ENCODE measurements at regions of chr12 and their contacts with region 1.

Region 1: DNA sequence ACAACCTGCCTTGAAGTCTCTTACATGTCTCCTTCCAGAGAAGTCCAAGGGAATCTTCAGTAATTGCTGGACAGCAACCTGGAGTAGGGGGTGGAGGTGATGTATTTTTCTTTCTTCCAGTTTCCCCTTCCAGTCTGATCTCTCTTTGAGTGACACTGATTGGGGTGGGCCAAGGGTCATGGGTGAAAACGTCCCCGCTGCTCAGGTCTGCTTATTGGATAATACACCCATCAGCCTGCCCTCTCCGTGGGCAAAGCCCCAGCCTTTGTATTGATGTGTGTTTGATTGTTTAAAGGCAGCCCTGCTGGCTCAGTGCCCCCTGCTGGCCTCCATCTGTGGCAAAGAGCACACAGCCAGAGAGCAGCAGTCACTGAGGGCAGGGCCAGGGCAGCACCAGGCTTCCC is 35.7 kb upstream of the ATP2A2 start:
- DNase-seq: peak; percentile 29
- ATAC-seq: peak; percentile 7; the same call in 1 of the 3 replicates
- H3K4me3 ChIP-seq: no peak overlapping the region
- H3K27ac ChIP-seq: peak overlapping the region; percentile 96
- H3K4me1 ChIP-seq: peaks cover 54% of the 10 kb centered on the region
- H3K27me3 ChIP-seq: no peaks in the 10 kb centered on the region
- CTCF ChIP-seq: peak; percentile 74
- EP300 ChIP-seq: no peak
- POLR2A ChIP-seq: no peak
- RAD21 ChIP-seq: peak; percentile 69

Region 2: DNA sequence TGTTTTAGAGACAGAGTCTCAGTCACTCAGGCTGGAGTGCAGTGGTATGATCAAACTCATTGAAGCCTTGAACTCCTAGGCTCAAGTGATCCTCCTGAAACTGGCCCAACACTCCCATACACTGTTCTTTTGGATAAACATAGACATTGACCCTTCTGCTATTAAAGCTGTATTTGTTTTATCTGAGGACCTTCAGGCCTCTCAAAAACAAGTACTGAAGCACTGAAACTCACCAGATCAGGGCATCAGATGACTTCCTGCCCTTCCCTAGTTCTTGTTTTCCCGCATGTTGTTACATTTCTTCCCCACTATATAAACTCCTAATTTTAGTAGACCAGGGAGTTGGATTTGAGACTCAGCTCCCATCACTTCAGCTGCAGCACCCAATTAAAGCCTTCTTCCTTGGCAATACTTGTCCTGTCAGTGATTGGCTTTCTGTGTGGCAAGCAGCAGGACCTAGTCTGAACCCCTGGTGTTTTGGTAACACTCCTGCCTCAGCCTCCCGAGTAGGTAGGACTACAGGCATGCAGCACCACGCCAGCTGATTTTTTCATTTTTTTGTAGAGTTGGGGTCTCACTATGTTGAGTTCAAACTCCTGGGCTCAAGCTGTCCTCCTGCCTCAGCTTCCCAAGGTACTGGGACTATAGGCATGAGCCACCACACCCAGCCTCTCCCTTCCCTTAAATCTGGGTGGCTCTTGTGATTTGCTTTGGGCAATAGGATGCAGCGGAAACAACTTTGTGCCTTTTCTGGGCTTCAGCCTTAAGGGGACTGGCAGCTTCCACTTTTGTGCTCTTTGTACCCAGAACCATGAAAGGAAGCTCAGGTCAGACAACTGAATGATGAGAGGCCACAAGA is 133.7 kb before region 1 on chr12:
- CTCF ChIA-PET with region 1: no interaction called
- POLR2A ChIA-PET with region 1: interaction called, 10 read pairs
- in situ Hi-C with region 1: no loop called
- intact Hi-C with region 1: no loop called
- DNase-seq: peak; percentile 99
- ATAC-seq: peak; percentile 90
- H3K4me3 ChIP-seq: peak overlapping the region in 1 of 3 experiments; percentile 25; a peak in 1 of 6 replicates
- H3K27ac ChIP-seq: peak overlapping the region; percentile 99
- H3K4me1 ChIP-seq: peaks cover 98% of the 10 kb centered on the region
- H3K27me3 ChIP-seq: no peaks in the 10 kb centered on the region
- CTCF ChIP-seq: no peak
- EP300 ChIP-seq: peak; percentile 72 to 88; a peak in 2 of 4 replicates
- POLR2A ChIP-seq: peak in 1 of 2 experiments; percentile 38; a peak in 1 of 4 replicates
- RAD21 ChIP-seq: no peak; the same call in 1 of the 2 replicates

Region 3: GRCh38 chr12:110256780-110257431 is 11.5 kb after region 1 on chr12:
- CTCF ChIA-PET with region 1: no interaction called
- POLR2A ChIA-PET with region 1: interaction called, 18 read pairs
- in situ Hi-C with region 1: no loop called
- intact Hi-C with region 1: loop called (anchors 2 kb)
- DNase-seq: no peak
- ATAC-seq: peak; percentile 73
- H3K4me3 ChIP-seq: peak overlapping the region; percentile 13 to 48 (median 25)
- H3K27ac ChIP-seq: peak overlapping the region; percentile 41
- H3K4me1 ChIP-seq: peaks cover 60% of the 10 kb centered on the region
- H3K27me3 ChIP-seq: no peaks in the 10 kb centered on the region
- CTCF ChIP-seq: no peak
- EP300 ChIP-seq: no peak
- POLR2A ChIP-seq: no peak
- RAD21 ChIP-seq: no peak

Region 4: GRCh38 chr12:110262442-110263388 is 17.3 kb after region 1 on chr12:
- CTCF ChIA-PET with region 1: no interaction called
- POLR2A ChIA-PET with region 1: interaction called, 5 read pairs
- in situ Hi-C with region 1: no loop called
- intact Hi-C with region 1: loop called (anchors 2 kb)
- DNase-seq: peak; percentile 84
- ATAC-seq: peak; percentile 89
- H3K4me3 ChIP-seq: peak overlapping the region; percentile 9 to 47 (median 11); a peak in 5 of 6 replicates
- H3K27ac ChIP-seq: peak overlapping the region; percentile 33
- H3K4me1 ChIP-seq: peaks cover 50% of the 10 kb centered on the region
- H3K27me3 ChIP-seq: no peaks in the 10 kb centered on the region
- CTCF ChIP-seq: no peak
- EP300 ChIP-seq: peak in 1 of 2 experiments; percentile 22; a peak in 1 of 4 replicates
- POLR2A ChIP-seq: no peak
- RAD21 ChIP-seq: no peak

Region 5: DNA sequence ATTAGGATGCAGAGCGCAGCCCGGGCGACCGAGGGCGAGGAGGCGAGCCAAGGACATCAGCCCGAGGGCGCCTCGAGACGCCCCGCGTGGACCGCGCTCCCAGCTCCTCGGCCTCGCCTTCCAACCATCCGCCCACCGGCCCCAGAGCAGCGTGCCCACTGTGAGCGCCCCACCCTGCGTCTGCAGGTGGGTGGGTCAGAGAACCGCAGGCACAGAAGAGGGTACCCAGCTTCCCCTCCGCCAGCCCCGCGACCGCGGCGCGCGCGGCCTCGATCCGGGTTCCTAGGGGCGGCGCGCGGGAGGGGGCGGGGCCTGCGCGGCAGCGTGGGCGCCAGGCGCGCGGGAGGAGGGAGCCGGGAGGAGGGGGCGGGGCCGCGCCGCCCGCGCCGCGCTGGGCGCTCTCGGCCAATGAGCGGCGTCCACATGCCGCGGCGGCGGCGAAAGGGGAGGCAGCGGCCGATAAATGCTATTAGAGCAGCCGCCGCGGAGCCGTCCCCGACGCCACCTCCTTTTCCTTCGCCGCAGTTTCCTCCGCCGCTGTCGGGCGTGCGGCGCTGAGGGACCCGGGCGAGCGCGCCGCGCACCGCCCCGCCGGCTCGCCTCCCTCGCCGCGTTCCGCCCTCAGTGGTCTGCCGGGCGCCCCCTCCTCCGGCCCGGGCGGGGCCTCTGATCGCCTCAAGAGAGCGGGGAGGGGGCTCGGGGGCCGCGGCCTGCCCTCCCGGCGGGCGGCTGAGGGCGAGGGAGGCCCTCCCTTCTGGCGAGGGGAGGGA is 35.6 kb after region 1 on chr12 and contains the start of gene ATP2A2:
- CTCF ChIA-PET with region 1: no interaction called
- POLR2A ChIA-PET with region 1: interaction called, 77 read pairs
- in situ Hi-C with region 1: no loop called
- intact Hi-C with region 1: loop called (anchors 2 kb)
- DNase-seq: peak; percentile 73
- ATAC-seq: peak; percentile 83
- H3K4me3 ChIP-seq: peak within 1 kb of the TSS; percentile 73 to 88 (median 73)
- H3K27ac ChIP-seq: peak within 1 kb of the TSS; percentile 92
- H3K4me1 ChIP-seq: peaks cover 63% of the 10 kb centered on the region
- H3K27me3 ChIP-seq: no peaks in the 10 kb centered on the region
- CTCF ChIP-seq: 0 out of 2 replicates have a peak, but pooled peaks have one; percentile 7
- EP300 ChIP-seq: 0 out of 4 replicates have a peak, but pooled peaks of 1 of the 2 experiments have one; percentile 6
- POLR2A ChIP-seq: peak; percentile 76 to 91
- RAD21 ChIP-seq: peak; percentile 38
- total RNA-seq, gene ATP2A2: 79.2 and 85.5 TPM in 2 replicates

Region 6: DNA sequence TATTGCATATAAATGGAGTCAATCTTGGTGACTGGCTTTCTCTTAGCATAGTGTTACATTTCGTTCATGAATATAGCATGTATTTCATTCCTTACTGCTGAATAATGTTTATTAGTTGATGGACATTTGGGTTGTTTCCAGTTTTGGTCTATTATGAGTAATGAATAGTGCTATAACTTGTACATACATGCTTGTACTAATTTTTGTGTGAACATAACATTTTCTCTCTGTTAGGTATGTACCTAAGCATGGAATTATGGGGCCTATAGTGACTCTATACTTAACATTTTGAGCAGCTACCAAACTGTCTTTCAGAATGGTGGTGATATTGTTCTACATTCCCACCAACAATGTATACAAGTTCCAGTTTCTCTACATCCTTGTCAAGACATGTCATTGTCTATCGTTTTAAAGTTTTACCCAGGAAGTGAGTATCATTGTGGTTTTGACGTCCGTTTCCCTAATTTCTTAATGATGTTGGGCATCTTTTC is 58.7 kb after region 1 on chr12:
- CTCF ChIA-PET with region 1: no interaction called
- POLR2A ChIA-PET with region 1: no interaction called
- in situ Hi-C with region 1: no loop called
- intact Hi-C with region 1: no loop called
- DNase-seq: no peak
- ATAC-seq: no peak
- H3K4me3 ChIP-seq: no peak overlapping the region
- H3K27ac ChIP-seq: no peak overlapping the region
- H3K4me1 ChIP-seq: peaks cover 17% of the 10 kb centered on the region; the same call in 1 of the 2 replicates
- H3K27me3 ChIP-seq: no peaks in the 10 kb centered on the region
- CTCF ChIP-seq: no peak
- EP300 ChIP-seq: no peak
- POLR2A ChIP-seq: no peak
- RAD21 ChIP-seq: no peak